HCT116 (cell line): ENCODE measurements at regions of chr6 and their contacts with region 1.

Region 1: DNA sequence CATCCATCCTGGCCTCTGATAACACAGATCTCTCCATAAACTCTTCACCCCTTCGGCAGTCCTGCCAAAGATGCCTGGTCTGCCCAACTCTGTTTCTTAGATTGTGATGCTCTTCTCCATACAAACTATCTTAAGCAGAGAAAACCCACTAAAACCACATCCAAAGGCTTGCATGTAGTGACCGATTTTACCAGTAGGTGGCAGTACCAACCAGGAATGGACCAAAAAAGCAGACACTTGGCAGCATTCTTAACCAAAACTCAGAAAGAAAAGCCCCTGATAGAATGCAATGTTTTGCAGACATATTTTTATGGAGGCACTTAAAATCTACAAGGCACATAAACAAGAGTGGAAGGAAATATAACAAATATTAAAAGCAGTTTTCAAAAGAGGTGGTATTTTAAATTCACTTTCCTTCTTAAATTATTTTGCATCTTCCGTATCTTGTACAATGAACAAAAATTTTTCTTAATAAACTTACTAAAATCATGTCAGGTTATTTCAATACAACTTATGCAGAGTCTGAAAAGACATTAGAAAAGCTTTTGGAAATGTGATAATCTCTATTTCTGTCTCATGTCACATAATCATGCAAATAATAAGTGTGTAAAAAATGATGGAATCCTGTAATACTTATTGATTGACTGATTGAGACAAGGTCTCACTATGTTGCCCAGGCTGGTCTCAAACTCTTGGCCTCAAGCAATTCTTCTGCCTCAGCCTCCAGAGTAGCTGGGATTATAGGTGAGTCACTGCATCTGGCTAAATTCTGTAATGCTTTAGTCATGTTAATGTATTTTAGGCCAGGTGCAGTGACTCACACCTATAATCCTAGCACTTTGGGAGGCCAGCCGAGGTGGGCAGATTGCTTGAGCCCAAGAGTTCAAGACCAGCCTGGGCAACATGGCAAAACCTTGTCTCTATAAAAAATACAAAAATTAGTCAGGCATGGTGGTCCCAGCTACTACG is 29.4 kb downstream of the LRP11 start:
- DNase-seq: peak; percentile 72
- ATAC-seq: peak; percentile 90
- H3K4me3 ChIP-seq: no peak overlapping the region; a peak in 1 of 4 replicates
- H3K27ac ChIP-seq: peak overlapping the region; percentile 39; the same call in 1 of the 2 replicates
- H3K4me1 ChIP-seq: peaks cover 11 to 15% of the 10 kb centered on the region in 2 experiments
- H3K27me3 ChIP-seq: no peaks in the 10 kb centered on the region
- CTCF ChIP-seq: peak; percentile 89 to 98 (median 90)
- POLR2A ChIP-seq: no peak
- RAD21 ChIP-seq: peak; percentile 88

Region 2: DNA sequence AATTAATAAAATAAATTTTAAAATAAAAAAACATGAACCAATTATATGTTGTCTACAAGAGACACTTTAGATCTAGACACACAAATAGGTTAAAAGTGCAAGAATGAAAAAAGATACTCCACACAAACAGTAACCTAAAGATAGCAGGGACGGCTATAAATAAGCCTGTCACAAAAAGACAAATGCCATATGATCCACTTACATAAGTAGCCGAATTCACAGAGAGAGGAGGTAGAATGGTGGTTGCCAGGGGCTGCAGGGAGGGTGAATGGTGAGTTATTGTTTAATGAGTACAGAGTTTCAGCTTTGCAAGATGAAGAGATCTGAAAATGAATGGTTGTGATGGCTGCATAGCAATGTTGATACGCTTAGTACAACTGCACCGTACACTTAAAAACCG is 219.0 kb before region 1 on chr6:
- CTCF ChIA-PET with region 1: no interaction called
- POLR2A ChIA-PET with region 1: no interaction called
- RAD21 ChIA-PET with region 1: no interaction called
- intact Hi-C with region 1: no loop called
- DNase-seq: no peak
- ATAC-seq: no peak
- H3K4me3 ChIP-seq: no peak overlapping the region
- H3K27ac ChIP-seq: no peak overlapping the region
- H3K4me1 ChIP-seq: no peaks in the 10 kb centered on the region
- H3K27me3 ChIP-seq: no peaks in the 10 kb centered on the region
- CTCF ChIP-seq: no peak
- POLR2A ChIP-seq: no peak
- RAD21 ChIP-seq: no peak

Region 3: DNA sequence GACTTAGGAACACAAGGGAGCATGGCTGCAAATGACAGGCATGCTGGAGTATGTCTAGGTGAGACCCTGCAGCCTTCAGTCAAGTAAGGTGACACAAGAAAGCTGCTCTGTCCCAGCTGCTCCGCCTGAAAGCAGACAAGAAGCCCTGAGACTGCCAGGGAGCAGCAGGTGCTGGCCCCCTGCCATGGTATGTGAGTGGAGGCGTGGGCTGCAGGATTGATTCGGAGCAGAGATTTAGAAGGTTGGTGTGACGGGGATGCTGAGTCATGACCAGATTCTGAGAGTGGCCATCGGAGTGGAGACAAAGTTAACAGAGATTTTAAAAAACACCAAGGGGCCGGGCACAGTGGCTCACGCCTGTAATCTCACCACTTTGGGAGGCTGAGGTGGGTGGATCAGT is 11.5 kb after region 1 on chr6:
- CTCF ChIA-PET with region 1: interaction called, 13 read pairs
- POLR2A ChIA-PET with region 1: no interaction called
- RAD21 ChIA-PET with region 1: no interaction called
- intact Hi-C with region 1: no loop called
- DNase-seq: no peak
- ATAC-seq: peak; percentile 51
- H3K4me3 ChIP-seq: 0 out of 4 replicates have a peak overlapping the region, but pooled peaks of 1 of the 2 experiments have one; percentile 20
- H3K27ac ChIP-seq: peak overlapping the region; percentile 44
- H3K4me1 ChIP-seq: peaks cover 39 to 51% of the 10 kb centered on the region in 2 experiments
- H3K27me3 ChIP-seq: no peaks in the 10 kb centered on the region
- CTCF ChIP-seq: no peak
- POLR2A ChIP-seq: no peak
- RAD21 ChIP-seq: no peak

Region 4: GRCh38 chr6:149863697-149864577 is 29.1 kb after region 1 on chr6 and contains the start of gene LRP11:
- CTCF ChIA-PET with region 1: interaction called, 3 read pairs
- POLR2A ChIA-PET with region 1: no interaction called
- RAD21 ChIA-PET with region 1: no interaction called
- intact Hi-C with region 1: loop called (anchors 1 kb)
- DNase-seq: no peak
- ATAC-seq: peak; percentile 84
- H3K4me3 ChIP-seq: peak within 1 kb of the TSS; percentile 54 to 71
- H3K27ac ChIP-seq: peak within 1 kb of the TSS; percentile 90
- H3K4me1 ChIP-seq: peaks cover 8 to 44% of the 10 kb centered on the region in 2 experiments; a peak in 3 of 4 replicates
- H3K27me3 ChIP-seq: no peaks in the 10 kb centered on the region
- CTCF ChIP-seq: no peak
- POLR2A ChIP-seq: peak; percentile 54
- RAD21 ChIP-seq: no peak
- total RNA-seq, gene LRP11: 27.8 TPM

Region 5: GRCh38 chr6:149925974-149926777 is 91.4 kb after region 1 on chr6:
- CTCF ChIA-PET with region 1: interaction called, 4 read pairs
- POLR2A ChIA-PET with region 1: no interaction called
- RAD21 ChIA-PET with region 1: no interaction called
- intact Hi-C with region 1: loop called (anchors 1 kb)
- DNase-seq: peak; percentile 51
- ATAC-seq: peak; percentile 95
- H3K4me3 ChIP-seq: peak overlapping the region; percentile 19 to 30; a peak in 3 of 4 replicates
- H3K27ac ChIP-seq: no peak overlapping the region; the same call in 1 of the 2 replicates
- H3K4me1 ChIP-seq: peaks cover 3 to 22% of the 10 kb centered on the region in 2 experiments; a peak in 3 of 4 replicates
- H3K27me3 ChIP-seq: 0 out of 2 replicates have a peak, but pooled peaks cover 4% of the 10 kb centered on the region
- CTCF ChIP-seq: peak; percentile 85 to 93 (median 92)
- POLR2A ChIP-seq: no peak
- RAD21 ChIP-seq: peak; percentile 99

Region 6: GRCh38 chr6:150016324-150017185 is 181.8 kb after region 1 on chr6:
- CTCF ChIA-PET with region 1: no interaction called
- POLR2A ChIA-PET with region 1: no interaction called
- RAD21 ChIA-PET with region 1: no interaction called
- intact Hi-C with region 1: loop called (anchors 5 kb)
- DNase-seq: peak; percentile 65
- ATAC-seq: peak; percentile 93
- H3K4me3 ChIP-seq: no peak overlapping the region
- H3K27ac ChIP-seq: no peak overlapping the region
- H3K4me1 ChIP-seq: 0 out of 4 replicates have a peak, but pooled peaks cover 0 to 7% of the 10 kb centered on the region in 2 experiments
- H3K27me3 ChIP-seq: no peaks in the 10 kb centered on the region
- CTCF ChIP-seq: peak; percentile 36 to 81 (median 67)
- POLR2A ChIP-seq: no peak
- RAD21 ChIP-seq: peak; percentile 87